ENCODE measurements at regions of chr12 and their contacts with region 1.

Region 1: GRCh38 chr12:108731105-108731865 is at the start of gene CORO1C:
- DNase-seq: peak; percentile 90 to 99 (median 94)
- ATAC-seq: peak; percentile 88
- H3K4me3 ChIP-seq: peak within 1 kb of the TSS; percentile 99
- H3K4me3 Mint-ChIP-seq: peak within 1 kb of the TSS; percentile 94 to 99 (median 96)
- H3K27ac ChIP-seq: peak within 1 kb of the TSS; percentile 78
- H3K27ac Mint-ChIP-seq: peak within 1 kb of the TSS; percentile 79 to 98 (median 96)
- H3K4me1 ChIP-seq: peaks cover 4 to 6% of the 10 kb centered on the region in 2 donors
- H3K4me1 Mint-ChIP-seq: peaks cover 0 to 44% (median 19%) of the 10 kb centered on the region in 7 donors
- H3K27me3 ChIP-seq: no peaks in the 10 kb centered on the region
- H3K27me3 Mint-ChIP-seq: peaks cover 0 to 9% (median 0%) of the 10 kb centered on the region in 5 donors
- total RNA-seq, gene CORO1C: 7.6 to 71.8 (median 15.7) TPM

Region 2: GRCh38 chr12:108618079-108618952 is 113.0 kb before region 1 on chr12:
- CTCF ChIA-PET with region 1: interaction called, 3 read pairs
- POLR2A ChIA-PET with region 1: no interaction called
- intact Hi-C with region 1: loop called in 1 of 2 experiments (anchors 2 kb)
- DNase-seq: peak; percentile 61 to 81 (median 74)
- ATAC-seq: peak; percentile 72
- H3K4me3 ChIP-seq: no peak overlapping the region
- H3K4me3 Mint-ChIP-seq: peak overlapping the region in 8 of 10 donors; percentile 13 to 54 (median 34)
- H3K27ac ChIP-seq: peak overlapping the region; percentile 65
- H3K27ac Mint-ChIP-seq: peak overlapping the region; percentile 67 to 92 (median 79)
- H3K4me1 ChIP-seq: peaks cover 34 to 42% of the 10 kb centered on the region in 2 donors
- H3K4me1 Mint-ChIP-seq: peaks cover 44 to 72% (median 64%) of the 10 kb centered on the region in 7 donors
- H3K27me3 ChIP-seq: no peaks in the 10 kb centered on the region
- H3K27me3 Mint-ChIP-seq: no peaks in the 10 kb centered on the region

Region 3: GRCh38 chr12:108691175-108691997 is 39.9 kb before region 1 on chr12:
- CTCF ChIA-PET with region 1: no interaction called
- POLR2A ChIA-PET with region 1: no interaction called
- intact Hi-C with region 1: loop called (anchors 1 kb)
- DNase-seq: peak in 8 of 9 donors; percentile 5 to 57 (median 20)
- ATAC-seq: peak; percentile 87
- H3K4me3 ChIP-seq: peak overlapping the region; percentile 43
- H3K4me3 Mint-ChIP-seq: peak overlapping the region; percentile 58 to 77 (median 70)
- H3K27ac ChIP-seq: no peak overlapping the region
- H3K27ac Mint-ChIP-seq: peak overlapping the region in 7 of 9 donors; percentile 1 to 86 (median 53)
- H3K4me1 ChIP-seq: peaks cover 28 to 32% of the 10 kb centered on the region in 2 donors
- H3K4me1 Mint-ChIP-seq: peaks cover 42 to 65% (median 63%) of the 10 kb centered on the region in 7 donors
- H3K27me3 ChIP-seq: no peaks in the 10 kb centered on the region
- H3K27me3 Mint-ChIP-seq: no peaks in the 10 kb centered on the region

Region 4: DNA sequence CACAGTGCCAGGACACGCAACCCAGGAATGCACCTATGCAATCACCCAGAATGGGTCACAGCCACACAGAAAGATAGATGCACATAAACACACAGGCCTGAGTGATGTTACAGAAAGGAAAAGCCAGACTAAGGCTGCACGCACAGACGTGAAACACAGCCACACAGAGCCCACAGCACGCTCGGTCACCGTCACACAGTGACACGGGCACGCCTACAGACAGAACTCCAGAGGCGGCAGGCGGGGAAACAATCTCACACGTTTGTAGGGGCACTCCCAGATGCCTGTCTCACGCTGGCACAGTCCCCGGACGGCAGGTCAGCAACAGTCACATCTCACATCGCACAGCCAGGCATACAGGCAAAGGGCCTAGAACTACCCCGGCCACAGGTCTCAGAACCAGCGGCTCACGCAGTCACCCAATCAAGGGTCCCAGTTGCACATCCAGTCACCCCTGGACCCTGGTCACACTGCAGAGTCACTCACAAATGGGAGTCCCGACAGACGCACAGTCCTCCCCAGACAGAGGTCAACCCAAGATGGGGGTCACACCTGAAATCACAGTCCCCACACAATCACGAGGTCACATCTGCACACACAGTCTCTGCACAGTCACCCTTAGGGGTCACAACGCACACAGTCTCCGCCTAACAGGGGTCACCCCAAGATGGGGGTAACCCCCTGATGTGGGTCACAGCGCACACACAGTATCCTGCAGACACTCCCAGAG is 125.3 kb after region 1 on chr12:
- CTCF ChIA-PET with region 1: no interaction called
- POLR2A ChIA-PET with region 1: interaction called, 4 read pairs
- intact Hi-C with region 1: loop called (anchors 1 to 2 kb)
- DNase-seq: peak; percentile 35 to 77 (median 54)
- ATAC-seq: peak; percentile 68
- H3K4me3 ChIP-seq: peak overlapping the region; percentile 84
- H3K4me3 Mint-ChIP-seq: peak overlapping the region; percentile 89 to 97 (median 94)
- H3K27ac ChIP-seq: peak overlapping the region; percentile 62
- H3K27ac Mint-ChIP-seq: peak overlapping the region; percentile 76 to 99 (median 92)
- H3K4me1 ChIP-seq: peaks cover 18 to 23% of the 10 kb centered on the region in 2 donors
- H3K4me1 Mint-ChIP-seq: peaks cover 26 to 56% (median 47%) of the 10 kb centered on the region in 7 donors
- H3K27me3 ChIP-seq: no peaks in the 10 kb centered on the region
- H3K27me3 Mint-ChIP-seq: peaks cover 0 to 2% (median 0%) of the 10 kb centered on the region in 5 donors

Region 5: DNA sequence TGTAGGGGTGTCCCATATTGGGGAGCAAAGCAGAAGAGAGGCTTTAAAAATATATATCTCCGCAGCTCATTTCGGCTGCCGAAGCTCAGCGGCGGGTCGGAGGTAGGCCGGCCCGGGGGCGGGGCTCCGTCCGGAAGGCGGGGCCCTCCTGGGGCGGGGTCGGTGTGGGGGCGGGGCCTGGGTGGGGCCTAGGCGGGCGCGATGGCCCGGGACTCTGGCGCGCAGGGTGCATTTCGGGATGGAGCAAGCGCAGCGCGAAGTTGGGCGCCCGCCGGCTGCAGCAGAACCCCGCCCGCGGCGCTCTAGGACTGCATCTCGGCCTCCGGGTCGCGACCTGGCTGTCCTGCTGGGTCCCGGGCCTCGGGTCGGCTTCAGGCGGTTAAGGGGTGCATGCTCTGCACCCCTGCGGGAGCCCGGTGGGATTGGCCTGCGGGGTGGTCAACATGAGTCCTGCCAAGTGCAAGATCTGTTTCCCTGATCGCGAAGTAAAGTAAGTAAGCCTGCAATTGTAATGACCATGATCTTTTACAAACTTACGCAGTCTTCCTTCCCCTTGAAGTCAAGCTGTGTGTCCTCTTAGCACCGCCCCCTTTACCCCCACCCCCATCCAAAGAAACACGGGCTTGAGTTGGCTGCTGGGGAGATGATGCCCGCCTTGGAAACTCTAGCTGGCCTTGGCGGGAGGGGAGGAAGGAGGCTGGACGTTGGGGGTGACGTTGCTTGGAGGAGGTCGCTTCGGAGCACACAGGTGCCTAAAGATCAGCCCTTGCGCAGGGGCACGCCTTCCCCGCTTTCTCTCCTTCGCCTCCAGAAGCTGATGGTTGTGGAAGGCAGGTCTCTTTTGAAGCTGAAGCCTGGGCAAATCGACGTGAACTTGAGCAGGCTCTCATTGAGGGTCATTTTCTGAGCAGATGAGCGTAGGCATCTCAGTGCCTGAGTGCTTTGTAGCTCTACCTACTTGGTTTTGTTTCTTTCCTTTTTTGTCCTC is 423.5 kb after region 1 on chr12:
- CTCF ChIA-PET with region 1: no interaction called
- POLR2A ChIA-PET with region 1: no interaction called
- intact Hi-C with region 1: loop called in 1 of 2 experiments (anchors 1 kb)
- DNase-seq: peak; percentile 58 to 87 (median 76)
- ATAC-seq: peak; percentile 99
- H3K4me3 ChIP-seq: peak overlapping the region; percentile 73
- H3K4me3 Mint-ChIP-seq: peak overlapping the region; percentile 85 to 98 (median 95)
- H3K27ac ChIP-seq: peak overlapping the region; percentile 61
- H3K27ac Mint-ChIP-seq: peak overlapping the region; percentile 71 to 95 (median 87)
- H3K4me1 ChIP-seq: peaks cover 5 to 10% of the 10 kb centered on the region in 2 donors
- H3K4me1 Mint-ChIP-seq: peaks cover 13 to 33% (median 19%) of the 10 kb centered on the region in 7 donors
- H3K27me3 ChIP-seq: no peaks in the 10 kb centered on the region
- H3K27me3 Mint-ChIP-seq: peaks cover 0 to 19% (median 0%) of the 10 kb centered on the region in 5 donors

Measured in naive thymus-derived CD4-positive, alpha-beta T cell (primary cell).